WTC11 (cell line): ENCODE measurements at regions of chr9 and their contacts with region 1.

Region 1: GRCh38 chr9:131590908-131591844 is 45.9 kb downstream of the PRRT1B start:
- DNase-seq: peak; percentile 83
- ATAC-seq: peak; percentile 94
- H3K4me3 Mint-ChIP-seq: no peak overlapping the region
- H3K27ac Mint-ChIP-seq: no peak overlapping the region
- H3K4me1 Mint-ChIP-seq: no peaks in the 10 kb centered on the region
- H3K27me3 Mint-ChIP-seq: no peaks in the 10 kb centered on the region
- CTCF ChIP-seq: peak; percentile 61

Region 2: GRCh38 chr9:131349881-131350563 is 241.2 kb before region 1 on chr9:
- CTCF ChIA-PET with region 1: no interaction called
- POLR2A ChIA-PET with region 1: no interaction called
- DNase-seq: peak; percentile 96
- ATAC-seq: peak; percentile 93
- H3K4me3 Mint-ChIP-seq: peak overlapping the region; percentile 62
- H3K27ac Mint-ChIP-seq: peak overlapping the region; percentile 75; the same call in 1 of the 2 replicates
- H3K4me1 Mint-ChIP-seq: peaks cover 7% of the 10 kb centered on the region
- H3K27me3 Mint-ChIP-seq: peaks cover 4% of the 10 kb centered on the region
- CTCF ChIP-seq: peak; percentile 68

Region 3: GRCh38 chr9:131608493-131609037 is 17.4 kb after region 1 on chr9:
- CTCF ChIA-PET with region 1: interaction called, 10 read pairs
- POLR2A ChIA-PET with region 1: no interaction called
- DNase-seq: peak; percentile 64
- ATAC-seq: peak; percentile 92
- H3K4me3 Mint-ChIP-seq: no peak overlapping the region
- H3K27ac Mint-ChIP-seq: peak overlapping the region; percentile 62
- H3K4me1 Mint-ChIP-seq: peaks cover 23% of the 10 kb centered on the region
- H3K27me3 Mint-ChIP-seq: no peaks in the 10 kb centered on the region
- CTCF ChIP-seq: no peak

Region 4: DNA sequence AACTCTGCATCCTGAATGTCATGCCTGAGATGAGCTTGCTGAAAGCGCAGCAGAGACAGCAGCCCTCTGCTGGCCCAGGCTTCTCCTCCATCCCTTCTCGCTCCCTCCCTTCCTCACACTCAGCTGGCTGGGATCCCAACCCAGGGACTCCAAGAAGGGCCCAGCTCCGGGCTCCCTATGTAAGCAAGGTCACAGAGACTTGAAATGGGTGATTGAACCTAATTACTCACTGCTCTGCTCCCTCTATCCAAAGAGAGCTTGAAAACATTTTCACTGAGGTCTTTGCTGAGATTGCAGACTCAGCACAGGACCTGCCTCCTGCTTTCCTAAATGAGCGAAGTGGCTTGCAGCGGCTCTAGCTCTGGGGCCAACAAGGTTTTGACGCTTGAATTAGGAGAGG is 105.9 kb after region 1 on chr9:
- CTCF ChIA-PET with region 1: interaction called, 18 read pairs
- POLR2A ChIA-PET with region 1: no interaction called
- DNase-seq: no peak
- ATAC-seq: peak; percentile 71
- H3K4me3 Mint-ChIP-seq: no peak overlapping the region
- H3K27ac Mint-ChIP-seq: 0 out of 2 replicates have a peak overlapping the region, but pooled peaks have one; percentile 42
- H3K4me1 Mint-ChIP-seq: peaks cover 93% of the 10 kb centered on the region
- H3K27me3 Mint-ChIP-seq: no peaks in the 10 kb centered on the region
- CTCF ChIP-seq: no peak

Region 5: GRCh38 chr9:131728961-131729360 is 137.8 kb after region 1 on chr9:
- CTCF ChIA-PET with region 1: interaction called, 11 read pairs
- POLR2A ChIA-PET with region 1: no interaction called
- DNase-seq: no peak
- ATAC-seq: peak; percentile 29; the same call in 1 of the 2 replicates
- H3K4me3 Mint-ChIP-seq: no peak overlapping the region
- H3K27ac Mint-ChIP-seq: peak overlapping the region; percentile 66
- H3K4me1 Mint-ChIP-seq: peaks cover 49% of the 10 kb centered on the region
- H3K27me3 Mint-ChIP-seq: no peaks in the 10 kb centered on the region
- CTCF ChIP-seq: no peak

Region 6: DNA sequence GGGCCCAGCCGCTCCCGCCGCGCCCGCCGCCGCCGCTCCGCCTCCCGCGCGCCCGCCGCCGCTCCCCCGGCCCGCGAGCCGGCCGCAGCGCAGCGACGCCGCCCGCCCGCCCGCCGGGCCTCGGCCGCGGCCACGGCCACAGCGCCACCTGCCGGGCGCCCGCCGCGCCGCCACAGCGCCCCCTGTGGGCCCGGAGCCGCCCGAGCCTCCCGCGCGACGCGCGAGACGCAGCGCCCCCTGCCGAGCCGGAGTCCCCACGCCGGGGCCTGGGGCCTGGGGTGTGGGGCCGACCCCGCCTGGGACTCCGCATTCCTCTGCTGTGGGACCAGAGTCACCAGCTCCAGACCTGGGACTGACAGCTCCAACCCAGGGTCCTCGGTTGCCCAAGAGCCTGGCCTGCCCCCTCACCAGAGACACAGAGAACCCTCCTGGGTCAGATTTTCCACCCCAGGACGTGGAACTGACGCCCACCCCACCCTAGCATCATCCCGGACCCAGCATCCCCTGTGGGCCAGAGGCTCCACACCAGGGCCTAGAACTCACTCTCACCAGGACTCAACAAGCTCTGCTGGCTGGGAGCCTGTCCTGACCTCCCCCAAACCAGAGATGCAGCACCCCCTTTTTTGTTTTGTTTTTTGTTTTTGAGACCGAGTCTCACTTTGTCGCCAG is 148.9 kb after region 1 on chr9 and contains the start of gene RAPGEF1:
- CTCF ChIA-PET with region 1: interaction called, 34 read pairs
- POLR2A ChIA-PET with region 1: no interaction called
- DNase-seq: peak; percentile 74
- ATAC-seq: peak; percentile 59
- H3K4me3 Mint-ChIP-seq: peak within 1 kb of the TSS; percentile 89
- H3K27ac Mint-ChIP-seq: no peak within 1 kb of the TSS
- H3K4me1 Mint-ChIP-seq: peaks cover 30% of the 10 kb centered on the region
- H3K27me3 Mint-ChIP-seq: no peaks in the 10 kb centered on the region; the same call in 1 of the 2 replicates
- CTCF ChIP-seq: peak; percentile 86
- total RNA-seq, gene RAPGEF1: 57.9 to 66.2 TPM (median 65.7 TPM) in 3 replicates

Region 7: GRCh38 chr9:131755541-131756198 is 164.5 kb after region 1 on chr9:
- CTCF ChIA-PET with region 1: interaction called, 14 read pairs
- POLR2A ChIA-PET with region 1: no interaction called
- DNase-seq: peak; percentile 92
- ATAC-seq: peak; percentile 93
- H3K4me3 Mint-ChIP-seq: no peak overlapping the region
- H3K27ac Mint-ChIP-seq: peak overlapping the region; percentile 98
- H3K4me1 Mint-ChIP-seq: peaks cover 11% of the 10 kb centered on the region
- H3K27me3 Mint-ChIP-seq: peaks cover 2% of the 10 kb centered on the region; the same call in 1 of the 2 replicates
- CTCF ChIP-seq: peak; percentile 80